ENCODE measurements at regions of chr17 and their contacts with region 1.

Region 1: GRCh38 chr17:39209317-39210092 is 9.4 kb downstream of the RPL19 start:
- DNase-seq: peak in 3 of 4 experiments; percentile 6 to 41 (median 40)
- ATAC-seq: no peak
- H3K4me3 ChIP-seq: no peak overlapping the region
- H3K27ac ChIP-seq: no peak overlapping the region
- H3K4me1 ChIP-seq: peaks cover 0 to 32% of the 10 kb centered on the region in 2 experiments; a peak in 3 of 5 replicates
- H3K27me3 ChIP-seq: peaks cover 0 to 36% of the 10 kb centered on the region in 2 experiments; a peak in 2 of 5 replicates
- CTCF ChIP-seq: no peak
- EP300 ChIP-seq: no peak
- POLR2A ChIP-seq: no peak
- RAD21 ChIP-seq: no peak

Region 2: DNA sequence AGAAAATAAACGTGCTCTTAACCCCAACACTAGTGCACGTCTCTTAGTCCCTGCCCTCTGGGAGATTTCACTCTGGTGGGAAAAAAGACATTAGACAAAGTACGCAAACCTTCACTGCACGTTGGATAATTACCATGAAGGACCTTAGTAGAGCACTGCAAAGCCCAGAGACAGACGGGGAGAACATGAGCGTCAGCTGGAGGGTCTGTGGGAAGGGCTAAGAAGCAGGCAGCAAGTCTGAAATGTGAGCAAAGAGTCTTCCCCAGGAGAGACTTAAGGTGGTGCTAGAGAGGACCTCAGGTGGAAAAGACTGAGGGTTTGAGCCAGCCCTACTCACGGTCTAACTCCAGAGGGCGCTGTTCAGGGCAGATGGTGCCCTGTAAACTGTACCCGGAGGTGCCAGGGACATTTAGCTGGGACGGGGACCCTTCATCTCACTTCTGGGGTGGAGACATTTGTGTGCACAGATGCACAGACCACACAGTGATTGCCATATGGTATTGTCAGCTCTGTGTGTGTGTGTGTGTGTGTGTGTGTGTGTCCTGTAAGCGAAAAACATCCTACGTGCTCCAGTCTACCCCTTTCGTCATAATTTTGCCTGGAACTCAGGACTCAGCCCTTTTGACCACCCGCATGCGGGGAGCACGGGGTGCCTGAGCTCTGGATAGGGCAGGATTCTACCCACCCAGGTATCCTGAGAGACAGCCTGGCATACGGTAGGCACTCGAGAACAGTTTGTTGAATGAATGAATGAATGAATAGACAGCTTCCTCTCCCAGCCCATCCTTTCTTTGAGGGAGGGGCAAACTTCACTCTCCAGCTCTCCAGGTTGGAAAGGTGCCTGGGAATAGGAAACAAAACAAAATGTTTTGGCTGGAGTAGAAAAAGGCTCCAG is 26.3 kb after region 1 on chr17:
- CTCF ChIA-PET with region 1: interaction called, 23 read pairs
- POLR2A ChIA-PET with region 1: interaction called, 6 read pairs
- in situ Hi-C with region 1: no loop called
- intact Hi-C with region 1: loop called (anchors 1 kb)
- DNase-seq: peak; percentile 82 to 87 (median 84)
- ATAC-seq: peak; percentile 96
- H3K4me3 ChIP-seq: no peak overlapping the region
- H3K27ac ChIP-seq: no peak overlapping the region
- H3K4me1 ChIP-seq: peaks cover 0 to 24% of the 10 kb centered on the region in 2 experiments; a peak in 4 of 5 replicates
- H3K27me3 ChIP-seq: peaks cover 0 to 6% of the 10 kb centered on the region in 2 experiments; a peak in 2 of 5 replicates
- CTCF ChIP-seq: peak; percentile 99 to 100 (median 99)
- EP300 ChIP-seq: no peak
- POLR2A ChIP-seq: no peak
- RAD21 ChIP-seq: peak in 1 of 2 experiments; percentile 59; a peak in 3 of 4 replicates

Region 3: DNA sequence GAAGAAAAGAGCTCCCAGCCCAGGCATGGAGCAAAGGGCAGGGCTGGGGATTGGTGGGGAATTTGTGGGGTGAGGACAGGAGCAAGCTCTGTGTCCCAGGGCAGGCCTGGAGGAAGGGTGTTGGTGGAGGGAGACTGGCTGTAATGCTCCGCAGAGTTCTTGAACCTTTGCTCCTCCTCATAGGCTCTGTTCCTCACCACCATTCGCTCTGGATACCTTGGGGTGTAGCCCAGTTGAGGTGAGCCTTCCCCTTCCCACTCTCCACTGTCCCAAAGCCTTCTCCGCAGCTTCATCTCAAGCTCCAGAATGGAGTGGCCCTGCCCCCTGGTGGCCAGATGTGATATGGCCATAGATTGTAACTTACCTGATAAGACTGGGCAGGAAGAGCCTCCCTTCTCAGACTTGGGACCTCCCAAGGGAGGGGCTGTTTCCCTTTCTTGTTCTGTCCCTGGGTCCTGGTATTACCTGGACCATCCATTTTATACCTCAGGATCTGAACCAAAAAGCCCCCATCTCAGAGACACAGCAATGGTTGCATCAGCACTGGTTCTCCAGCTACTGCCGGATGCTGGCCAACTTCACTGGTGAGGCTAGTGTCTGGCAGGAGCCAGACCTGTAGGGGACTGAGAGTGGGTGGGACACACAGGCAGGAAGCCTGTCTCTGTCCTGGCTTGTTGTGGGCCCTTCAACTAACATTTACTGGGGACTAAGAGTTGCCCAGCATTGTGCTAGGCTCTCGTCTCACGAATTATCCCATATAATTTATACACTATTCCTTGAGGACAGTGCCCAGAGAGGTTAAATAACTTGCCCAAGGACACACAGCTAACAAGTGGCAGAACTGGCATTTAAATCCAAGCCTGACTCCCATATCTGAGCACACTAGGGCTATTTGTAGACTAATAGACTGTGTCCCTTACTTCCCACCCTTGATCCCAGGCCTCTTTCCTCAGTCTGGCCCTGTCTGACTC is 35.4 kb after region 1 on chr17:
- CTCF ChIA-PET with region 1: interaction called, 21 read pairs
- POLR2A ChIA-PET with region 1: interaction called, 5 read pairs
- in situ Hi-C with region 1: no loop called
- intact Hi-C with region 1: loop called (anchors 1 kb)
- DNase-seq: peak; percentile 81 to 93 (median 84)
- ATAC-seq: peak; percentile 95
- H3K4me3 ChIP-seq: no peak overlapping the region
- H3K27ac ChIP-seq: no peak overlapping the region
- H3K4me1 ChIP-seq: peaks cover 2 to 10% of the 10 kb centered on the region in 2 experiments; a peak in 3 of 5 replicates
- H3K27me3 ChIP-seq: no peaks in the 10 kb centered on the region
- CTCF ChIP-seq: peak; percentile 94 to 99 (median 95)
- EP300 ChIP-seq: no peak
- POLR2A ChIP-seq: no peak
- RAD21 ChIP-seq: peak; percentile 65 to 86

Region 4: GRCh38 chr17:39352511-39352910 is 143.0 kb after region 1 on chr17:
- CTCF ChIA-PET with region 1: no interaction called
- POLR2A ChIA-PET with region 1: no interaction called
- in situ Hi-C with region 1: no loop called
- intact Hi-C with region 1: loop called (anchors 5 kb)
- DNase-seq: no peak
- ATAC-seq: peak; percentile 66
- H3K4me3 ChIP-seq: no peak overlapping the region
- H3K27ac ChIP-seq: peak overlapping the region; percentile 60; the same call in 2 of the 3 replicates
- H3K4me1 ChIP-seq: peaks cover 0 to 6% of the 10 kb centered on the region in 2 experiments; a peak in 3 of 5 replicates
- H3K27me3 ChIP-seq: no peaks in the 10 kb centered on the region
- CTCF ChIP-seq: peak in 1 of 3 experiments; percentile 51; a peak in 2 of 6 replicates
- EP300 ChIP-seq: no peak
- POLR2A ChIP-seq: no peak
- RAD21 ChIP-seq: peak in 1 of 2 experiments; percentile 38; a peak in 2 of 4 replicates

Region 5: GRCh38 chr17:39547713-39548478 is 338.4 kb after region 1 on chr17:
- CTCF ChIA-PET with region 1: no interaction called
- POLR2A ChIA-PET with region 1: no interaction called
- in situ Hi-C with region 1: no loop called
- intact Hi-C with region 1: loop called (anchors 5 kb)
- DNase-seq: peak; percentile 75 to 79 (median 76)
- ATAC-seq: peak; percentile 95
- H3K4me3 ChIP-seq: no peak overlapping the region
- H3K27ac ChIP-seq: no peak overlapping the region
- H3K4me1 ChIP-seq: no peaks in the 10 kb centered on the region
- H3K27me3 ChIP-seq: no peaks in the 10 kb centered on the region
- CTCF ChIP-seq: peak; percentile 86 to 97 (median 88)
- EP300 ChIP-seq: no peak
- POLR2A ChIP-seq: no peak
- RAD21 ChIP-seq: peak; percentile 51 to 79; a peak in 3 of 4 replicates

Region 6: DNA sequence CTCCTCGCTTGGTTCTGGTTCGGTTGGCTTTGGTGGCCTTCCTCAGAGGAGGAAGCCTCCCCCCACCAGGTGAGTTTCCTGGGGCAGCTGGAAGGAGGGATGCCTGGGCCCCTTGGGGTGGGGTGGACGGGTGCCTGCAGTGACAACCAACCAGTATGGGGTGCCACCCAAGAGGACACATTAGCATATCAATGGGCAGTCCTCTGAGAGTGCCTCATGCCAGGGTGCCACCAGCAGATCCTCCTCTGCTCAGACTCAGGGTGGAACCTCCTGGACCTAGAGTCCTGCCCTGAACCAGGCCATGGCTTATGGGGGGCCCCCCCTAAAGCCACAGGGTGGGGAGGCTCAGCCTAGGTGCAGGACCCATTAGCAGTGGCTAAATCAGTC is 420.0 kb after region 1 on chr17:
- CTCF ChIA-PET with region 1: no interaction called
- POLR2A ChIA-PET with region 1: no interaction called
- in situ Hi-C with region 1: no loop called
- intact Hi-C with region 1: no loop called
- DNase-seq: no peak
- ATAC-seq: no peak
- H3K4me3 ChIP-seq: no peak overlapping the region
- H3K27ac ChIP-seq: no peak overlapping the region
- H3K4me1 ChIP-seq: peaks cover 0 to 41% of the 10 kb centered on the region in 2 experiments; a peak in 4 of 5 replicates
- H3K27me3 ChIP-seq: no peaks in the 10 kb centered on the region
- CTCF ChIP-seq: no peak
- EP300 ChIP-seq: no peak
- POLR2A ChIP-seq: no peak
- RAD21 ChIP-seq: no peak